Right lobe of liver (tissue), 6 donors: ENCODE measurements at regions of chr11 and their contacts with region 1.

Region 1: GRCh38 chr11:125164422-125165110 is at the start of gene PKNOX2:
- DNase-seq: peak; percentile 70 to 82 (median 74)
- ATAC-seq: peak; percentile 79 to 84 (median 80)
- H3K4me3 ChIP-seq: peak within 1 kb of the TSS; percentile 43 to 53 (median 49)
- H3K27ac ChIP-seq: peak within 1 kb of the TSS in 1 of 3 donors; percentile 13
- H3K4me1 ChIP-seq: peaks cover 0 to 26% (median 5%) of the 10 kb centered on the region in 4 donors
- H3K27me3 ChIP-seq: peaks cover 0 to 7% of the 10 kb centered on the region in 2 donors
- CTCF ChIP-seq: peak; percentile 6 to 60 (median 56)
- POLR2A ChIP-seq: no peak
- total RNA-seq, gene PKNOX2: 0.09 to 0.31 (median 0.14) TPM

Region 2: DNA sequence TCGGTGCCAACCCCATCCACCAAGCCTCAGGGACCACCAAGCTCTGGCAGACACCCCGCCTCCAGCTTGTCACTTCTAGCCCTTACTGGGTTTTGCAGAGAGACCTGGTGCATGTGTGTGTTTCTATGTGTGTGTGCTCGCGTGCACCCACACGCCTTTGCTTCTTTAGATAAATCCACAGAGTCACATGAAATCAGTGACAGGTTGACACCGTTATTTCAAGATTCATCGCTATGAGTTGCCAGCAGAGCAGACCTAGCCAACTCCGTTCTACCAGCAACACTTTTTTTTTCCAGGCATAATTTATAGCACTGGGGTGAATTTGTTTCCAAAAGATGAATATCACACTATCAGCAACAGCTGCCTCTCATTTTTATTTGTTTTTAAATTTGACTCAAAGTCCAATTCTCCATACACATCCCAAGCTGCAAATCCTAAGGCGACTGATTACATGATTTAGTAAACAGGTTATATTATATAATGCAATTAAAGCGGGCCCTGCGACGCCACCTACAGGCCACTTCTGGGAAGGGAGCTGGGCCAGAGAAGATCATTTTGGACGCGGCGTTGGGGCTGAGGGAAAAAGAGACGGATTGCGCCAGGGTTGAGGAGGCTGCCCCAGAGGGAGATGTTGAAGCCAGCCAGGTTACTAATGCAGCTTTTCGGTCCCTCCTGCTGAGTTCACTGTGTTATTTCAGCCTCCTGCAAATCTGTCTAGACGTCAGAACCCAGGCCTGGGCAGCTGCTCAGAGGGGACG is 181.0 kb after region 1 on chr11:
- intact Hi-C with region 1: loop called in 1 of 2 experiments (anchors 10 kb)
- DNase-seq: peak; percentile 60 to 71 (median 71)
- ATAC-seq: peak; percentile 73 to 88 (median 83)
- H3K4me3 ChIP-seq: no peak overlapping the region
- H3K27ac ChIP-seq: no peak overlapping the region
- H3K4me1 ChIP-seq: no peaks in the 10 kb centered on the region
- H3K27me3 ChIP-seq: no peaks in the 10 kb centered on the region
- CTCF ChIP-seq: peak; percentile 71 to 95 (median 89)
- POLR2A ChIP-seq: no peak

Region 3: DNA sequence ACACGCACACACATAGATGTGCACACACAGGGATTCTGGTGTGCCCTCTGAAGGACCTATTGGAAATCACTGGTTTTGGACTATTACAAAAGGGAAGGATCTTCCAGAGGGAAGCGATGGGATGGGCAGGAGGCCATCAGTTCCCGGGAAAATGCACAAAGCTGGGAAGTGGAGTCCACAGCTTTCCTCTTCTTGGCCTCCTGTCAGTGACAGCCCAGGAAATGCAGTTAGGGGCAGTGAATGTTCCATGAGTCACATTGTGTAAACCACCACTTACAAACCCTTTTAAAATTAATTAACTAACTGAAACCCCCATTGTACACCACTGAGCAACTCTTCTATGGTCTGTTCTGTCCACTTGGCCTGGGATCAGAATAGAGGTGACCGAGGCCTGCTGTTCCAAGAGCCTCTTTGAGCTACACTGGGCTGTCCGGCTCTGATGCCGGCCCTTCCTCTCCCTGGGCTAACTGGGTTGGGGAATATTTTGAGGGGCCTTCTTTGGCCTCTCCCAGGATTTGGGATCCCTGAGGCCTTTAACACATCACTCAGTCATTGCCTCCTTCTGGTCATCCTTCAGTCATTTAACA is 193.8 kb after region 1 on chr11:
- intact Hi-C with region 1: loop called in 1 of 2 experiments (anchors 5 kb)
- DNase-seq: no peak
- ATAC-seq: no peak
- H3K4me3 ChIP-seq: no peak overlapping the region
- H3K27ac ChIP-seq: no peak overlapping the region
- H3K4me1 ChIP-seq: no peaks in the 10 kb centered on the region
- H3K27me3 ChIP-seq: no peaks in the 10 kb centered on the region
- CTCF ChIP-seq: no peak
- POLR2A ChIP-seq: no peak